GM10248 (cell line): ENCODE measurements at regions of chr2 and their contacts with region 1.

Region 1: GRCh38 chr2:57906152-57906732 is 140.4 kb upstream of the VRK2 start:
- DNase-seq: peak; percentile 51
- CTCF ChIP-seq: peak; percentile 78

Region 2: GRCh38 chr2:57615855-57616556 is 290.2 kb before region 1 on chr2:
- CTCF ChIA-PET with region 1: no interaction called
- POLR2A ChIA-PET with region 1: no interaction called
- DNase-seq: no peak
- CTCF ChIP-seq: no peak

Region 3: GRCh38 chr2:57892920-57893319 is 13.3 kb before region 1 on chr2:
- CTCF ChIA-PET with region 1: interaction called, 19 read pairs
- POLR2A ChIA-PET with region 1: no interaction called
- DNase-seq: peak; percentile 21
- CTCF ChIP-seq: no peak

Region 4: GRCh38 chr2:57918126-57918525 is 11.9 kb after region 1 on chr2:
- CTCF ChIA-PET with region 1: interaction called, 10 read pairs
- POLR2A ChIA-PET with region 1: no interaction called
- DNase-seq: no peak
- CTCF ChIP-seq: no peak

Region 5: GRCh38 chr2:58448065-58448507 is 541.8 kb after region 1 on chr2:
- CTCF ChIA-PET with region 1: interaction called, 13 read pairs
- POLR2A ChIA-PET with region 1: no interaction called
- DNase-seq: peak; percentile 22
- CTCF ChIP-seq: peak; percentile 62